ENCODE measurements at regions of chr20 and their contacts with region 1.

Region 1: DNA sequence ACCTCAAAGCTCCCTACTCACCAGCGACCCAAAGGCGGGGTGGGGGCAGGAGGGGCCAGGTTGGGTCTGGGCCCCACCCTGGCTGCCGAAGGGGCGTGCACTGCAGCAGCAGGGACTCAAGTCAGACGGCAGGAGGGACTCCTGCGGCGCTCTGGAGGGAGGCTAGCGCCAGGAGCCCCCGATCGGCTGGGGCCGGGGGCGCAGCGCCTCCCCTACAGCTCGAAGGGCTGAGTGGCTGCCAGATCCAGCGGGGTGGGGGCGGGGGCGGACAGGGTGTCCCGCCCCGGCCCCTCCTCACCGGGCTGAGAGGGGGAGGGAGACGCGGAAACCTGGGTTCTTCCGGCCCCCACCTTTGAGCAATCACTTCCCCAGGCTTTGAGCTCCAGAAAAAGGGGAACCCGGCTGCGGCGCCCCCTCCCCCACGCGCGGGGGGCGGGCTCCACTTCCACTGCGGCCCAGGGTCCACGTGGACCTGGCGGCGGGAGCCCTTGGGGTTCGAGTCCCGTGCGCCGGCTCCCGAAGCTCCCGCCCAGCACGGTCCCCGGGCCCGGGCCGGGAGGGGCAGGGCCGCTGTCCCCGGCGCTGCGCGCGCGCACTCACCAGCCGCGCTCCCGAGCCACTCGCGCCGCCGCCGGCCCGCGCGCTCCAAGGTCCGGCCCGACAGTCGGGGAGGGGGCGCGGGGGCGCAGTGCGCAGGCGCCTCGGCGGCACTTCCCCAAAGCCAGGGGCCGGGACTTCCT is at the start of gene RGS19:
- DNase-seq: peak; percentile 94
- ATAC-seq: peak; percentile 65
- total RNA-seq, gene RGS19: 6.6 TPM

Region 2: GRCh38 chr20:63980806-63981728 is 98.4 kb before region 1 on chr20 and contains the start of gene PRPF6:
- intact Hi-C with region 1: loop called (anchors 5 kb)
- DNase-seq: peak; percentile 97
- ATAC-seq: peak; percentile 92
- total RNA-seq, gene PRPF6: 46.4 TPM

Region 3: GRCh38 chr20:64119681-64120341 is 40.4 kb after region 1 on chr20:
- intact Hi-C with region 1: loop called (anchors 2 kb)
- DNase-seq: no peak
- ATAC-seq: peak; percentile 16

Measured in Right ventricle myocardium inferior (tissue), 1 donor.